Right ventricle myocardium inferior (tissue), 1 donor: ENCODE measurements at regions of chr14 and their contacts with region 1.

Region 1: DNA sequence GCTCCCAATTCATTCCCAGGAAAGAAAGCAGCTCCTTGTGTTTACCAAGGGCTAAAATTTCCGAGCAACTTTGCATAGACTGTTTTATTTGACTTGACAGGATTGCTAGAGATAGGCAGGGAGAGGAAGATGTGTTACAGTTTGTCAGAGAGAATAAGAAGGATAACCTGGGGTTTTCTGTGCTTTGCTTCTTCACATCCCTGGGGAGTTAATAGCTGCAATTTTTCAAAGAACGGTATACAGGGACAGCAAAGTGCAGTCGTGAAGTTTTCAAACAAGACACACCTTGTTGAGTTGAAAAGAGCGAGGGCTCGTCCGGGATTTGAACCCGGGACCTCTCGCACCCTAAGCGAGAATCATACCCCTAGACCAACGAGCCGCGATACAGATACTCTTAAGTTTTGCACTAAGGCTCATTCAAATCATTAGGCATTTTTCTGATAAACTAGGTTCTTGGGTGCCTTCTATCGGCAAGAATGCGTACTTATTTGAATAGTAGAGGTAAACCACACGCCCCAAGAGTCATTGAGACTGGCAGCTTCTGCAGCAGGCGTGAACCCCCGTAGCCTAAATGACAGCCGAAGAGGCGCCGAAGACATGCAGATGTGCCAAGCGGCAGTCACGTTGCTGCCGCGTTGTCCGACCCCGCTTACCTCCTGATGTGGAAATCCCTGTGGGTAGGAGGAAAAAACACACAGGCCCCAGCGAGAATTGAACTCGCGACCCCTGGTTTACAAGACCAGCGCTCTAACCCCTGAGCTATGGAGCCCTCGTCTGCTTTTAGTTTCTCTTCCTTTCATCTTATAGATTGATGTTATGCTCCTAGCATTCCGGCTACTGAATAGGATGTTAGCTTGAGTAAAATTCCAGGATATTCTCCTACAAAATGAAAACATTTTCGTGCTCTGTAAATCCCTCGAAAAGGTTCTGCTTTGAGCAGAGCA is 22.2 kb upstream of the RNASE12 start:
- DNase-seq: peak; percentile 78
- ATAC-seq: peak; percentile 85

Region 2: GRCh38 chr14:20327005-20327869 is 286.1 kb before region 1 on chr14:
- intact Hi-C with region 1: loop called (anchors 1 kb)
- DNase-seq: no peak
- ATAC-seq: no peak

Region 3: GRCh38 chr14:20413045-20413799 is 200.1 kb before region 1 on chr14 and contains the start of gene TEP1:
- intact Hi-C with region 1: loop called (anchors 2 kb)
- DNase-seq: peak; percentile 95
- ATAC-seq: peak; percentile 96
- total RNA-seq, gene TEP1: 8.2 TPM

Region 4: DNA sequence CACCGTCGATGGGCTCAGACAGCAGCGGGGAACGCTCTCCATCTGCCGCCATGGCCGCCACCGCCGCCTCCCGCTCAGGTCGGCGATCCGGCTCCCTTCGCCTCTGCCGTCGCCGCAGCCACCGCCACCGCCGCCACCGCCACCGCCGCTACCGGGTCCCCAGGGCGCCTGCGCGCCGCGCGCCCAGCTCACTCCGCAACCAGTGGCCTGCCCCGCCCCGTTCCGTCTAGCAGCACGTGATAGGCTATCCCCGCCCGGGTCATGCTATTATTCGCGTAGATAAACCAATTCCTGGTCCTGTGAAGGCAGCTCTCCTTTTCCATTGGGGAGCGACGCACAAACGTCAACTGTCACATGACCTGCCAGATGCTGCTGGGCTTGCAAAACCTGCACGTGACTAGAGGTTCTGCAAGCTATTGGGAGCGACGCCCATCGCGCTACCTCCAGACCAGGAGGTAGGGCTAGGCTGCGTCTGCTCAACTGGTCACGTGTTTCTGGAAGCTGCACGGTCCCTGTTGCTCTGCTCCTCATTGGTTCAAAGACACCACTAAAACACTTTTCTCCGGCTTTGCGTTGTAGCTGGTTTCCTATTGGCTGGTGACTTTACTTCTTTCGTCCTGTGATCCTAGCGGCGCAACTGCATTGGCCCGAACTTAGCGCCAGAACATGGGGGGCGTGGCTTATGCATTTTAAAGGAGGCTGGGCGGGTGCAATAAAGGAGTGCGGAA is 151.9 kb before region 1 on chr14 and contains the start of gene PIP4P1:
- intact Hi-C with region 1: loop called (anchors 5 kb)
- DNase-seq: peak; percentile 100
- ATAC-seq: peak; percentile 98
- total RNA-seq, gene PIP4P1: 17.2 TPM

Region 5: DNA sequence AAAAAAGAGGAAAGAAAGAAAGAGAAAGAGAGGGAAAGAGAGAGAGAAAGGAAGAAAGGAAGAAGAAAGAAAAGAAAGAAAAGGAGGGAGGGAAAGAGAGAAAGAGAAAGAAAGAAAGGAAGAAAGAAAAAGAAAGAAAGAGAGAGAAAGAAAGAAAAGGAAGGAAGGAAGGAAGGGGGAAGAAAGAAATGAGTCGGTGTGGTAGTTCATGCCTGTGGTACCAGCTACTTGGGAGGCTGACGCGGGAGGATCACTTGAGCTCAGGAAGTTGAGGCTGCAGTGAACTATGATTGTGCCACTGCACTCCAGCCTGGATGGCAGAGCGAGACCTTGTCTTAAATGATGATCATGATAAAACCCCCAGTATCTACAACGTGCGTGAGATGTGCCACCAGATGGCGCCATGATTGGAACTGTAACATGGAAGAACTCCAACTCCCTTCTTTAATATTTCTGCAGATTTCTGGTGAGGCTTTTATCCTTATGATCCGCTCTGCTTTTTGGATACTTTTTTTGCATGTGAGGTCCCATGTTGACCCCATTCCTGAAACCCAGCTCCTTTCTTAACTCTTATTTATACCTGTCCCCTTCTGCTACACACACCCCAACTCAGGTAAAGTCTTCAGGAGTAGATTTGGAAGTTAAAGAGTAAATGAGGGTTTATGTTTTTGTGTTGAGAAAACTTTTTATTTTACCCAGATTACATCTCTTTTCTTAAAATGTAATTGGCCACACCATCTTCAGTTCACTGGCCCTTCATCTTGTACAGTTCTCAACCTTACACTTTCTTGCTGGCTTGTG is 82.4 kb before region 1 on chr14:
- intact Hi-C with region 1: loop called (anchors 5 kb)
- DNase-seq: peak; percentile 83
- ATAC-seq: no peak